Posterior cingulate gyrus (tissue), 11 donors: ENCODE measurements at regions of chr1 and their contacts with region 1.

Region 1: GRCh38 chr1:234154320-234155251 is 218.7 kb upstream of the COA6 start:
- DNase-seq: no peak

Region 2: GRCh38 chr1:234014208-234014607 is 140.4 kb before region 1 on chr1:
- intact Hi-C with region 1: no loop called
- DNase-seq: no peak

Region 3: GRCh38 chr1:234212764-234213657 is 58.4 kb after region 1 on chr1:
- intact Hi-C with region 1: loop called (anchors 10 kb)
- DNase-seq: no peak